ENCODE measurements at regions of chr4 and their contacts with region 1.

Region 1: DNA sequence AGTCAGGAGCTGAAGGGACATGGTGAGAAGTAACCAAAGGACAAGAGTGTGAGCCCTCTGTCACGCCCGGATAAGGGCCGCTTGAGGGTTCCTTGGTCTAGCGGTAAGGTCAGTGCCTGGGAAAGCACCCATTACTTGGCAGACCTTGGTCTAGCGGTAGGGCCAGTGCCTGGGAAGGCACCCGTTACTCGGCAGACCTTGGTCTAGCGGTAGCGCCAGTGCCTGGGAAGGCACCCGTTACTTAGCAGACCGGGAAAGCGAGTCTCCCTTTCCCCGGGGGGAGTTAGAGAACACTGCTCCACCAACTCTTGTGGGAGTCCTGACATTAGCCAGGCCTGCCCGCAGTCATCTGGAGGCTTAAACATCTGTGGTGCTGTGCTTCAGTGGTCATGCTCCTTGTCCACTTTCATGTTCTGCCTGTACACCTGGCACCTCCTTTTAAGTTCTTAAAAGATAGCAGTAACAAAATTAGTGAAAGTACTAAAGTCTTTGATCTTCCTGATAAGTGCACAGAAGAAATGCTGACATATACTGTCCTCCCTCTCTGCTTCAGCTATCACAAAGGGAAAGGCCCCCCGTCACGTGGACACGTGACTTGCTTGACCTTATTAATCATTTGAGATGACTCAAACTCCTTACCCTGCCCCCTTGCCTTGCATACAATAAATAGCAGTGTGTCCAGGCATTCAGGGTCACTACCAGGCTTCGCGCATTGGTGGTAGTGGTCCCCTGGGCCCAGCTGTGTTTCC is 9.3 kb upstream of the SEC24B start:
- DNase-seq: peak; percentile 38 to 67 (median 59)
- H3K4me3 ChIP-seq: no peak overlapping the region
- H3K27ac ChIP-seq: peak overlapping the region in 2 of 5 donors; percentile 15 to 46
- H3K4me1 ChIP-seq: peaks cover 0 to 3% of the 10 kb centered on the region in 2 donors
- H3K27me3 ChIP-seq: no peaks in the 10 kb centered on the region
- CTCF ChIP-seq: no peak
- POLR2A ChIP-seq: no peak

Region 2: GRCh38 chr4:109368661-109369060 is 55.6 kb before region 1 on chr4:
- intact Hi-C with region 1: no loop called
- DNase-seq: no peak
- H3K4me3 ChIP-seq: no peak overlapping the region
- H3K27ac ChIP-seq: no peak overlapping the region
- H3K4me1 ChIP-seq: no peaks in the 10 kb centered on the region
- H3K27me3 ChIP-seq: no peaks in the 10 kb centered on the region
- CTCF ChIP-seq: no peak
- POLR2A ChIP-seq: no peak

Region 3: GRCh38 chr4:109629775-109630174 is 205.5 kb after region 1 on chr4:
- intact Hi-C with region 1: no loop called
- DNase-seq: no peak
- H3K4me3 ChIP-seq: no peak overlapping the region
- H3K27ac ChIP-seq: no peak overlapping the region
- H3K4me1 ChIP-seq: no peaks in the 10 kb centered on the region
- H3K27me3 ChIP-seq: no peaks in the 10 kb centered on the region
- CTCF ChIP-seq: no peak
- POLR2A ChIP-seq: no peak

Region 4: DNA sequence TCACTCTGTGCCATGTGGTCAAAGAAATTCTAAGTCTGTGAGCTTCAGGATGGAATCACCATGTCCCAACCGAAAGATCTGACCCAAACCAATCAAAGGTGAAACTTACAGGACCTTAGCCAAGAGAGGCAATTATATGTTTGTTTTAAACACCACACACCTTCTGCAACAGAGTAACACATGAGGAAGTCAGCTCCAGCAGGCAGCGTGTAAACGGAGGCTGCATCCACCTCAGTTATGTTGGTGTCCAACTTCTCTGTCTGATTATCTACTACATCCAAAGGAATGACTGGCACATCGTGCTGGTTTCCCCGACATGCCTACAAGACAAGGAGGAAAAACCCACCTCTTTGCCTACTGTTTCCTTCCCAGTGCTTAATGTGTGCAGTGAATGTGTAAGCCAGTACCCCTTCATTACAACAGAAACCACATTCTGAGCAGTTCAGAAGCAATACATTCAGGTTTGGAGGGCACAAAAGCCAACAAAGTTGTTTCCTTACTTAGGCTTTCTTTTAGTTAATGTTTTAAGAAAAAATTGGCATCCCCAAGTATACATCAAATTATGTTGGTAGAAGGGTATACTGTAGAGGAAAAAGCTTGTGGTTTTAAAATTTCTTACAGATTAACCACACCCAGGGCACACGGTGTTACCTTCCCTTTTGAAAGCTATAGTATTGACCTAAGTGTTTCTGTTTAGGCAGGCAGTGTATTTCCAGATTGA is 266.6 kb after region 1 on chr4:
- intact Hi-C with region 1: loop called in 1 of 2 experiments (anchors 10 kb)
- DNase-seq: no peak
- H3K4me3 ChIP-seq: no peak overlapping the region
- H3K27ac ChIP-seq: no peak overlapping the region
- H3K4me1 ChIP-seq: no peaks in the 10 kb centered on the region
- H3K27me3 ChIP-seq: no peaks in the 10 kb centered on the region
- CTCF ChIP-seq: no peak
- POLR2A ChIP-seq: no peak

Region 5: GRCh38 chr4:109803924-109804571 is 379.8 kb after region 1 on chr4:
- intact Hi-C with region 1: loop called (anchors 10 kb)
- DNase-seq: peak in 5 of 7 donors; percentile 25 to 48 (median 32)
- H3K4me3 ChIP-seq: no peak overlapping the region
- H3K27ac ChIP-seq: no peak overlapping the region
- H3K4me1 ChIP-seq: peaks cover 5% of the 10 kb centered on the region in 2 donors
- H3K27me3 ChIP-seq: no peaks in the 10 kb centered on the region
- CTCF ChIP-seq: peak in 5 of 6 experiments; percentile 32 to 58 (median 47)
- POLR2A ChIP-seq: no peak

Region 6: DNA sequence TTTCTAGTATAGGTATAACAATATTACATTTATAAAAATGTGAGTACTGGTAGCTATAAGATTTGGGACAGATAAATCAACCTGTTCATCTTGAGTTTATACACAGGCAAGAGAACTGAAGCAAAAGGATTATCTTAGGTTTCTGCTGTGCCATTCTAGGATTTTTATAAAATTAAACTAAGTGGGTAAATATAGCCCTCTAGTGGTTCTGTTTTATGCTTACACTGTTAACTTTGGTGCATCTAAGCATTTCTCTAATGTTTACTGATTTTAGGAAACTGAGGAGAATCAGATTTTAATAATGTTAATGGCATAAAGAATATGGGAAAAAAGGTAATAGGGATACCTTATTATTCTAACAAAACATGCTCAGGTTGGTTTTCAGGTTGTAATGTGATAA is 402.5 kb after region 1 on chr4:
- intact Hi-C with region 1: loop called in 1 of 2 experiments (anchors 5 kb)
- DNase-seq: no peak
- H3K4me3 ChIP-seq: no peak overlapping the region
- H3K27ac ChIP-seq: no peak overlapping the region
- H3K4me1 ChIP-seq: no peaks in the 10 kb centered on the region
- H3K27me3 ChIP-seq: no peaks in the 10 kb centered on the region
- CTCF ChIP-seq: peak; percentile 27 to 66 (median 54)
- POLR2A ChIP-seq: no peak

Region 7: DNA sequence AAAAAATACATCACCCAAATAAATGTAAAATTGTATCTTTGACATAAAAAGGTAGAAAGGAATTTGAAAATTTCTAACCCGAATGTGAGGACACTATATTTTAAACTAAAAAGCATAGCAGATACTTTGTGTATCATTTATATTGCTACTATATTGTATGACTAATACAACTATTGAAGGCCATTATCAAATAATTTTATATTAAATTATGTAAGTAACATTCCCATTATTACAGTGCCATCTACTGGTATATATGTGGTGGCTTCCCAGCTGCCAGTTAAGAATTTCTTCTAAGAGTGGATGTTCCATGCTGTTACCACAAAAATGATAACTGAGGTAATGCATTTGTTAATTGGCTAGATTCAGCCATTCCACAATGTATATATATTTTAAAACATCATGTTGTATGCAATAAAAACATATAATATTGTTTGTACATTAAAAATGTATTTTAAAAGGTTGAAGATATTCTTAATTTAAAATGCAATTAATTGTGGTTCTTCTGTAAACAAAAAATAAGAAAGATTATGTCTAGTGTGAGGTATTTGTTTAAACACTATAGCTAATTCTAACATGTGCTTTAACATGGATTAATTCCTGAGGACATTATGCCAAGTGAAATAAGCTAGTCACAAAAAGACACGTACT is 553.7 kb after region 1 on chr4:
- intact Hi-C with region 1: loop called (anchors 5 to 10 kb)
- DNase-seq: peak in 3 of 7 donors; percentile 15 to 35 (median 26)
- H3K4me3 ChIP-seq: no peak overlapping the region
- H3K27ac ChIP-seq: no peak overlapping the region
- H3K4me1 ChIP-seq: no peaks in the 10 kb centered on the region
- H3K27me3 ChIP-seq: no peaks in the 10 kb centered on the region
- CTCF ChIP-seq: peak; percentile 41 to 75 (median 62)
- POLR2A ChIP-seq: no peak

Measured in adrenal gland (tissue), 19 donors.